CD4-positive, alpha-beta memory T cell (primary cell): ENCODE measurements at regions of chr11 and their contacts with region 1.

Region 1: DNA sequence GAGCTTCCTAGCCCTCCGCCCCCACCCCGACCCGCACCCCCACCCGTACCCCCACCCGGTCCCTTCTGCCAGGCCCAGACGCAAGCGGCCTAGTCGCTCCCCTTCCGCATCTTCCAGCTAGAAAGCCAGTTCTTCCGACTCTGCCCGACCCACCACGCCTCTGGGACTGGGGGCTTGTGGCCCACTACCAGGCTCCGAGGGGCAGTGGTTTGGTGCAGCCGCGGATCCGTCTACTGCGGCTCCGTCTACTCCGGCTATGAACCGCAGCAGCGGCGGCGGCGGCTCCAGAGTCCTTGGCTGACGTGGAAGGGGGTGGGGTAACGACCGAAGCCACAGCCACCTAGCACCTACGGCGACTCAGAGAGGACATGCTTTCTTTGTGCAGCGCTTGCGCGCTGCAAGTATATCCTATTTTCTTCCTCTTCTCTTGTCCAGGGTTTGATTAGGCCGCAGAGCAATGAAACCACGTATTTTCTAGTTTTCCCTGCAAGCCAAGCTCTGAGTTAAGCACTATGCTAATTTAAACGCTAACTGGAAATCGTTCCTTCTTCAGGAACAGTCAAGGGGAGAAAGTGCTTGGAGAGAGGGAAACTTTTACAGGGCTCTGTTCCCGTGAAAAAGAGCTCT is at the start of gene COPB1:
- DNase-seq: peak; percentile 91 to 95 (median 92)
- H3K4me3 ChIP-seq: peak within 1 kb of the TSS; percentile 76 to 89
- H3K4me3 Mint-ChIP-seq: peak within 1 kb of the TSS; percentile 92 to 100 (median 94)
- H3K27ac ChIP-seq: peak within 1 kb of the TSS; percentile 65
- H3K27ac Mint-ChIP-seq: peak within 1 kb of the TSS; percentile 82 to 100 (median 98)
- H3K4me1 ChIP-seq: peaks cover 49% of the 10 kb centered on the region
- H3K4me1 Mint-ChIP-seq: peaks cover 28 to 57% (median 35%) of the 10 kb centered on the region in 4 donors
- H3K27me3 ChIP-seq: no peaks in the 10 kb centered on the region
- H3K27me3 Mint-ChIP-seq: no peaks in the 10 kb centered on the region
- total RNA-seq, gene COPB1: 79.8 to 82.1 TPM

Region 2: DNA sequence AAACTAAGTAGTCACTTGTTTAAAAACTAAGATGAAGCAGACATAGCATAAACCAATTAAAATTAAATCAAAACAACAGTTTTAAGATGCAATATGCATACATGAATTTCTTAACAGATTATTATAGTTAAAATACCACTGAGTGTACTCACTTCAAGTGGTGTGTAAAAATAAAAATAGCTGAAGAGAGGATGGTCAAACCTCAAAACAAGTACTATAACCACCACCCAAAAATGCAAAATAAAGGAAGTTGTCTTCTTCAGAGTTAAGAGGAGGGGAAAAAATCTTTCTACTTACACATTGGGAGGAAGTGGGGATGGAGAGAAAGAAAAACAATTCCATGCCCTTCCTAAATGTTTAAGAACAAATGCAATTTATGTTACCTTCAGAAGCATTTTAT is 172.6 kb before region 1 on chr11:
- CTCF ChIA-PET with region 1: no interaction called
- POLR2A ChIA-PET with region 1: no interaction called
- intact Hi-C with region 1: no loop called
- DNase-seq: no peak
- H3K4me3 ChIP-seq: no peak overlapping the region
- H3K4me3 Mint-ChIP-seq: peak overlapping the region in 3 of 8 donors; percentile 26 to 55 (median 53)
- H3K27ac ChIP-seq: no peak overlapping the region
- H3K27ac Mint-ChIP-seq: no peak overlapping the region
- H3K4me1 ChIP-seq: peaks cover 21% of the 10 kb centered on the region
- H3K4me1 Mint-ChIP-seq: peaks cover 19 to 53% (median 35%) of the 10 kb centered on the region in 4 donors
- H3K27me3 ChIP-seq: no peaks in the 10 kb centered on the region
- H3K27me3 Mint-ChIP-seq: no peaks in the 10 kb centered on the region

Region 3: DNA sequence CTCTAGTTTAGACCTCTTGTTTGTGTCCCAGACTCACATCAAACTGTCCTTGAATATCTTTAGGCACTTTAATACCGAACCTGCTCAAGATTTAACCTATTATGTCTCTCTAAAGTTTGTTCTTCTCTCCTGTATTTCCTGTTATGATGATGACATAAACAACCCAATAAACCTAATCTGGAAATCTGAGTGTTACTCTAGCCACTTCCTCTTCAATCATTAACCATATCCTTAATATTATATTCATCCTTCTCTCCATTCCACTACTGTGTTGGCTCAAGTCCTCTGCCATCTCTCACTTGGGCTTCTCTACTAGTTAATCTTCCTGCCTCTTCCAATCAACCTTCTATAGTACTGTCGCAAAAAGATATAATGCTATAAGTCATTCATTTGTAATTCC is 36.0 kb before region 1 on chr11:
- CTCF ChIA-PET with region 1: no interaction called
- POLR2A ChIA-PET with region 1: no interaction called
- intact Hi-C with region 1: no loop called
- DNase-seq: peak in 3 of 5 donors; percentile 9 to 19 (median 10)
- H3K4me3 ChIP-seq: no peak overlapping the region
- H3K4me3 Mint-ChIP-seq: no peak overlapping the region
- H3K27ac ChIP-seq: no peak overlapping the region
- H3K27ac Mint-ChIP-seq: no peak overlapping the region
- H3K4me1 ChIP-seq: peaks cover 38% of the 10 kb centered on the region
- H3K4me1 Mint-ChIP-seq: peaks cover 12 to 17% (median 13%) of the 10 kb centered on the region in 4 donors
- H3K27me3 ChIP-seq: no peaks in the 10 kb centered on the region
- H3K27me3 Mint-ChIP-seq: no peaks in the 10 kb centered on the region

Region 4: DNA sequence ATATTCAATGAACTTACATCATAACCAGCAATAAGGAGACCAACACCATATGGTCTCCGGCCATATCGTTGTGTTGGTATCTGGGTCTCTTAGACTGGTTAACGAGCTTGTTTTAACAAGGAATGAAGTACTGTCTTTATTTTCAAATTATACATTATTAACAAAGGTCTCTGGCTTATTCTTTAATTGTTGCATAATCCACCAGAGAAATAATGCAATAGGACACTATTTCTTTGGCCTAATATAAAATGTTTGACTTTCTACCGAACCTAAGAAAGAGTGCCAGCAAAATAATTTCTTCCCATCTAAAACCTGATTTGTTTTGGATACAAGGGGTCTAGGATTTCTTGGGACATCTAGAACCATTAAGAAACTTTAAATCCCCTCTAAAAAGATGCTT is 14.1 kb after region 1 on chr11:
- CTCF ChIA-PET with region 1: interaction called, 4 read pairs
- POLR2A ChIA-PET with region 1: interaction called, 37 read pairs
- intact Hi-C with region 1: no loop called
- DNase-seq: no peak
- H3K4me3 ChIP-seq: no peak overlapping the region
- H3K4me3 Mint-ChIP-seq: no peak overlapping the region
- H3K27ac ChIP-seq: no peak overlapping the region
- H3K27ac Mint-ChIP-seq: no peak overlapping the region
- H3K4me1 ChIP-seq: peaks cover 14% of the 10 kb centered on the region
- H3K4me1 Mint-ChIP-seq: peaks cover 11 to 26% (median 15%) of the 10 kb centered on the region in 4 donors
- H3K27me3 ChIP-seq: no peaks in the 10 kb centered on the region
- H3K27me3 Mint-ChIP-seq: no peaks in the 10 kb centered on the region

Region 5: DNA sequence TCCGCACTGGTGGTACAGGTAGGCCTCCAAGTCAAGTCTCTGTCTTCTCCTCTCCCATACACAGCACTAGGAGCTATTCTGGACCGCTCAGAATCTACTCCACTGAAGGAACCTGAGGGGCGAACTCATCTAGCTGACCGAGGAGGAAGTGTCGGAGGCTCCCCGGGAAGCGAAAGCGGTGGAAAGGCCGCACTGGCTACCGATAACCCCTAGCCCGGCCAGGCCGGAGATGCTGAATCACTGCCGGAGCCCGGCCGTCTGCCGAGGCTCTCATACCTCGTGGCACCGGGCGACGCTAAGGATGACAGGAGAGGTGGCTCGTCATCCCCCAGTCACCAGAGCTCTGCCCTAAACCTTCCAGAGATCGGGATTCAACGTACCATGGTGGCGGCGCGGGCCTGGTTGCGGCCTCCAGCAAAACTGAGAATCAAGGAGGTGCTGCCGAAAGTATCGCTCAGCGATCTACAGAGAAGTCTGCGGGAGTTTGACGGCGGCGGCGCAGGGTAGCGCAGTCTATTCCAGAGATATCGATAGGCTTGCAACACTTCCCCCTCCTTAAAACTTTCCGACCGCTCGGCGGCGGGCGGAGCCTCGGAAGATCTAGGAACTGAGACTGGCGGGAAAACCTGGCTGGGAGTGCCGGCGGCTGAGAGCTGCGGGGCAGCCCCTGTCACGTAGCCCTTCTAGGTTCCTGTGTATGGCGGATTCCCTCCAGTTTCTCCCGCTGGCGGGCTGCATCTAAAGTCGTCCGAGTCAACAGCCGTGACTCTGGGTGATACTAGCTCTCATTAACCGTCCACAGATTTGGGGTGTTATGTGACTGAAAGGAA is 20.5 kb after region 1 on chr11 and contains the start of gene PSMA1:
- CTCF ChIA-PET with region 1: interaction called, 5 read pairs
- POLR2A ChIA-PET with region 1: interaction called, 37 read pairs
- intact Hi-C with region 1: loop called (anchors 1 kb)
- DNase-seq: peak; percentile 88 to 96 (median 91)
- H3K4me3 ChIP-seq: peak within 1 kb of the TSS; percentile 63 to 95
- H3K4me3 Mint-ChIP-seq: peak within 1 kb of the TSS; percentile 93 to 99 (median 98)
- H3K27ac ChIP-seq: peak within 1 kb of the TSS; percentile 99
- H3K27ac Mint-ChIP-seq: peak within 1 kb of the TSS; percentile 95 to 98 (median 98)
- H3K4me1 ChIP-seq: peaks cover 27% of the 10 kb centered on the region
- H3K4me1 Mint-ChIP-seq: peaks cover 17 to 41% (median 29%) of the 10 kb centered on the region in 4 donors
- H3K27me3 ChIP-seq: no peaks in the 10 kb centered on the region
- H3K27me3 Mint-ChIP-seq: no peaks in the 10 kb centered on the region
- total RNA-seq, gene PSMA1: 95.8 to 105 TPM